ENCODE measurements at regions of chr5 and their contacts with region 1.

Region 1: DNA sequence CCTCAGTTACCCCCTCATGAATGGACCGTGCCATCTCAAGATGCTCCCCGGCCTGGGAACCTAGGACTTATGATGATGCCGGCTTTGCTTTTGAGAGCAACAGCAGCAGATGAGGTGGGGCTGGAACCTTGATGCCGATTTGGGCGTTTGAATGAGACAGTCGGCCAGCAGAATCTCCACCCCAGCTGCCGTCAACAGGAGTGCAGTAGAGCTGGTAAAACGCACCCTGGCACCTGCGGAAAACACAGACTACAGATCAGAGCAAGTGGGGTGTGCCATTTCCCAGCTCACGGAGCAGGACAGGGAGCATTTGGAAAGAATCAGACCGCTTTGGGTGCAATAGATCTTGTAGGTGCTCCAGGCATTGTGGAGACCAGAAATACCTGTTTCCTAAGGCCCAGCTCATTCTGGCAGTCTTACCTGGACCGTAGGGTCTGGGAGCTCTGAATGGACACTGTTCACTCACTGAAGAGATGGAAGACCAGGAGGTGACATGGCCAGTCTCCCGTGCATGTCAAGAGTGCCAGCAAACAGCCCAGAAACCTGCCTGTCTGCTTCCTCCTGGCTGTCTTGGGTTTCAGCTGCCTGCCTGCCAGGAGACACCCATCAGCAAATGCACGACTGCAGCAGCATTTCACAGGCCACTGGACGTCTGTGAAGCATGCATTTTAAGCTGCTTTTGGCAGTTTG is 317.7 kb upstream of the IRX4 start:
- DNase-seq: no peak
- H3K27ac ChIP-seq: no peak overlapping the region
- CTCF ChIP-seq: no peak

Region 2: GRCh38 chr5:2217219-2217618 is 16.8 kb after region 1 on chr5:
- CTCF ChIA-PET with region 1: no interaction called
- POLR2A ChIA-PET with region 1: no interaction called
- DNase-seq: no peak
- H3K27ac ChIP-seq: no peak overlapping the region
- CTCF ChIP-seq: no peak

Region 3: GRCh38 chr5:2332521-2332920 is 132.1 kb after region 1 on chr5:
- CTCF ChIA-PET with region 1: interaction called, 11 read pairs
- POLR2A ChIA-PET with region 1: no interaction called
- DNase-seq: no peak
- H3K27ac ChIP-seq: no peak overlapping the region
- CTCF ChIP-seq: no peak